Dendritic cell treated with granulocyte-macrophage colony-stimulating factor and Interleukin-4, amounts not matched to agents 40 ng/mL and 50 ng/mL, for 4 days (primary cell): ENCODE measurements at regions of chr3 and their contacts with region 1.

Region 1: GRCh38 chr3:133573054-133573628 is 345 bp upstream of the CDV3 start:
- H3K4me3 Mint-ChIP-seq: peak overlapping the region; percentile 80
- H3K27ac Mint-ChIP-seq: peak overlapping the region; percentile 98
- H3K4me1 Mint-ChIP-seq: peaks cover 67% of the 10 kb centered on the region
- H3K27me3 Mint-ChIP-seq: no peaks in the 10 kb centered on the region

Region 2: GRCh38 chr3:132416807-132417694 is 1156.1 kb before region 1 on chr3 and contains the start of gene DNAJC13:
- intact Hi-C with region 1: loop called (anchors 5 kb)
- H3K4me3 Mint-ChIP-seq: peak within 1 kb of the TSS; percentile 98
- H3K27ac Mint-ChIP-seq: peak within 1 kb of the TSS; percentile 92
- H3K4me1 Mint-ChIP-seq: peaks cover 14% of the 10 kb centered on the region
- H3K27me3 Mint-ChIP-seq: no peaks in the 10 kb centered on the region

Region 3: DNA sequence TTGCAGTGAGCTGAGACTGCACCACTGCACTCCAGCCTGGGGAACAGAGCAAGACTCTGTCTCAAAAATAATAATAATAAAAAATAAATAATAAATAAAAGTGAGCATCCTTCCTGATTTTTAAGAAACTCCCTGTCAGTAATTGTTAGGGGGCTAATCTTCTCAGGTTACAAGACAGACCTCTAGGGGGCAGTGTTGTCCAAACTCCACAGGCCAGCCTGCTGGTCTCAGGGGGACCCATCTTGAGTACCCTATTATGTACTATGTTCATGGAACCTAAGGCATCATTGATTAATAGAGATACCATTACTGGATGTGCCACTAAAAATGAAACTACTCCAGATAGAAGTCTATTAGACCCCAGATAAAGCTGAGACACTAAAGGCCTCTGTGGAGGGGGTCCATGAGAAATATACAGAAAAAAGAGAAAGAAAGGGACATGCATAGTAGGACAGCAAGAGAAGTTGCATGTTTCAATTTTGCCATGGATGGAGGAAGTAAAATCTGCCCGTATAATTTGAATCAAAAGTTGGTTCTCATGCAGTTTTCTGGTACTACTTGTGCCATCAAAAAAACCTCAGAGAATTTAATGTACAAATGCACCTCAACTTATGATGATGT is 85.1 kb before region 1 on chr3:
- intact Hi-C with region 1: loop called (anchors 2 kb)
- H3K4me3 Mint-ChIP-seq: no peak overlapping the region
- H3K27ac Mint-ChIP-seq: no peak overlapping the region
- H3K4me1 Mint-ChIP-seq: no peaks in the 10 kb centered on the region
- H3K27me3 Mint-ChIP-seq: no peaks in the 10 kb centered on the region

Region 4: DNA sequence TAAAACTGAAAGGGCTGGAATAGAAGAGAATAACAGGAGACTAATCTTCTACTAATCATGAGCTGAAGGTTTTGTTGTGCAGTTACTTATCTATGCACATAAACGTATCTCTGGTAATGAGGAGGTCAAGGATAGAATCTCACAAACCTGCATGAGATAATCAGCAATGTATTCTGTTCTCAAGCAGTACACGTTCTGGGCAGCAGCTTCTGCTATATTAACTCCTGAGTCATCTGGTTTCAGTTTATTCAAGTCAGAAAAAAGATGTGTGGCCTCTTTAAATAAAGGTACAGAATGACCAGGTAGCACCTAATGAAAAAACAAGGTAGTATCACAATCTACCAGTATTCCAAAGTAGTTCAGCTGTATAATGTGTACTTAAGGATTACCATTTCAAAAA is 35.2 kb after region 1 on chr3:
- intact Hi-C with region 1: no loop called
- H3K4me3 Mint-ChIP-seq: no peak overlapping the region
- H3K27ac Mint-ChIP-seq: no peak overlapping the region
- H3K4me1 Mint-ChIP-seq: no peaks in the 10 kb centered on the region
- H3K27me3 Mint-ChIP-seq: no peaks in the 10 kb centered on the region

Region 5: DNA sequence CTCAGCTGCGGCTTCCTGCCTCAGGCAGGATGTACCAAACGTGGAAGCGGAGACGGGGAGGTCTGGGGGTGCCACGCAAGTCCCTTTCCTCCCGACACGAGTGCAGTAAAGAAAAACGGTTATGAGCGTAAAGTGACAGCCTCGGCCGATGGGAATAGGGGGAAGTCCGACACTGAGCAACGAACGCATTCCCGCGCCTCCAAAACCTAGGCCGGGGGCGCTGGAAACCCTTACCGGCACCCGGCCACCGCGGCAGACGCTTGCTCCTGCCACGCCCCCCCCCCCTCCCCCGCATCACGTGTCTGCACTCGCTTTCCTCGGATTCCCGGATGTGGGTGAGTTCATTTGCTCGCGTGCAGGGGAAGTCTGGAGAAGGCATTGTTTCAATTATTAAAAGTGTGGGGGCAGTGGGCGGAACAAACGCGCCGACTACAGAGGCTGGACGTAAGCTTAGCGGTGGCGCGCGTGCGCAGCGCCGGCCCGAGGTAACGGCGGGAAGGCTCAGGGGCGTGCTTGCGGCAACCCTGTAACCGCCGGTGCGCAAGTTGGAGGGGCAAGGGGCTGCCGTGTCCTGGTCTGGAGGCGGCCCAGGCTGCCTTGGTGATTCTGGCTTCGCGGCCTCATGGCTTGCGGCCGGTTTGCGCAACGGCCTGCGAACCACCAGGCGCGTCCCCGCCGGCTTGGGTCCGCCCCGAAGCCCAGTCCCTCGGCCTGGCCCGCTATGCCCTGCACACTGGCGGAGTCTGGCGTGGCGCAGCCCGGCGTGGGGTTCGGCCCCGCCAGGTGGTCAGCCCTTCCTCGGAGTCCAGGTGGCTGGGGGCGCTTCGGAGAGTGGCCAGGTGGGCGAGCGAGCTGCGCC is 912.8 kb after region 1 on chr3 and contains the starts of genes ANAPC13 and CEP63:
- intact Hi-C with region 1: loop called (anchors 5 kb)
- H3K4me3 Mint-ChIP-seq: peak within 1 kb of the TSS; percentile 89
- H3K27ac Mint-ChIP-seq: peak within 1 kb of the TSS; percentile 98
- H3K4me1 Mint-ChIP-seq: peaks cover 53% of the 10 kb centered on the region
- H3K27me3 Mint-ChIP-seq: no peaks in the 10 kb centered on the region